OCI-LY7 (cell line): ENCODE measurements at regions of chr6 and their contacts with region 1.

Region 1: DNA sequence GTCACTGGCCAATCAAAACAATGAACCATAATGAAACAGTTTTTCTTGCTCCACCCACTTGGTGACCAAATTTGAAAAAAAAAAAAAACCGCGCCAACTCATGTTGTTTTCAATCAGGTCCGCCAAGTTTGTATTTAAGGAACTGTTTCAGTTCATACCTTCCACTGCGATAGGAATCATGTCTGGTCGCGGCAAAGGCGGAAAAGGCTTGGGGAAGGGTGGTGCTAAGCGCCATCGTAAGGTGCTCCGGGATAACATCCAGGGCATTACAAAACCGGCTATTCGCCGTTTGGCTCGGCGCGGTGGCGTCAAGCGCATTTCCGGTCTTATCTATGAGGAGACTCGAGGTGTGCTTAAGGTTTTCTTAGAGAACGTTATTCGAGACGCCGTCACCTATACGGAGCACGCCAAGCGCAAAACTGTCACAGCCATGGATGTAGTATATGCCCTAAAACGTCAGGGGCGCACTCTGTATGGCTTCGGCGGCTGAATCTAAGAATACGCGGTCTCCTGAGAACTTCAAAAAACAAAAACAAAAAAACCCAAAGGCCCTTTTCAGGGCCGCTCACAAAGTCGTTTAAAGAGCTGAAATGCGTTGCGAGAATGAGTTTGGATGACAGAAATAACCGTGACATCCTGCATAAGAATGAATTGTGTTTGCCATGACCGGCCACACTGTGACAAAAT is 16.7 kb downstream of the HFE start:
- DNase-seq: peak; percentile 94
- H3K4me3 ChIP-seq: peak overlapping the region; percentile 66
- H3K27ac ChIP-seq: peak overlapping the region; percentile 96
- H3K4me1 ChIP-seq: peaks cover 25% of the 10 kb centered on the region
- CTCF ChIP-seq: peak; percentile 65

Region 2: DNA sequence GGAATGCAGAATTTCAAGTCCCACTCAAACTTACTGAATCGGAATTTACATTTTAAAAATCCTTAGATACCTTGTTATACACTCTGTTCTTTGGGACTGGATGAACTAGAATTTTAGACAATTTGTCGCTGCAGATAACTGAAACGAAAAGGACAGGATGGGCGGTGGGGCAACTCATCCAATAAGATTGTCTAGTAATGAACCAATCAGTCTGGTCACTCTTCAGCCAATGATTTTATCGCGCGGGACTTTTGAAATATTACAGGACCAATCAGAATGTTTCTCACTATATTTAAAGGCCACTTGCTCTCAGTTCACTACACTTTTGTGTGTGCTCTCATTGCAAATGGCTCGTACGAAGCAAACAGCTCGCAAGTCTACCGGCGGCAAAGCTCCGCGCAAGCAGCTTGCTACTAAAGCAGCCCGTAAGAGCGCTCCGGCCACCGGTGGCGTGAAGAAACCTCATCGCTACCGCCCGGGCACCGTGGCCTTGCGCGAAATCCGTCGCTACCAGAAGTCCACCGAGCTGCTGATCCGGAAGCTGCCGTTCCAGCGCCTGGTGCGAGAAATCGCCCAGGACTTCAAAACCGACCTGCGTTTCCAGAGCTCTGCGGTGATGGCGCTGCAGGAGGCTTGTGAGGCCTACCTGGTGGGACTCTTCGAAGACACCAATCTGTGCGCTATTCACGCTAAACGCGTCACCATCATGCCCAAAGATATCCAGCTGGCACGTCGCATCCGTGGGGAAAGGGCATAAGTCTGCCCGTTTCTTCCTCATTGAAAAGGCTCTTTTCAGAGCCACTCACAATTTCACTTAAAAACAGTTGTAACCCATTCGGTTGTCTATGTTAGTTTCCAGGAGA is 58.6 kb before region 1 on chr6:
- CTCF ChIA-PET with region 1: no interaction called
- POLR2A ChIA-PET with region 1: interaction called, 15 read pairs
- intact Hi-C with region 1: no loop called
- DNase-seq: peak; percentile 97
- H3K4me3 ChIP-seq: peak overlapping the region; percentile 67
- H3K27ac ChIP-seq: peak overlapping the region; percentile 99
- H3K4me1 ChIP-seq: peaks cover 66% of the 10 kb centered on the region
- CTCF ChIP-seq: peak; percentile 54

Region 3: DNA sequence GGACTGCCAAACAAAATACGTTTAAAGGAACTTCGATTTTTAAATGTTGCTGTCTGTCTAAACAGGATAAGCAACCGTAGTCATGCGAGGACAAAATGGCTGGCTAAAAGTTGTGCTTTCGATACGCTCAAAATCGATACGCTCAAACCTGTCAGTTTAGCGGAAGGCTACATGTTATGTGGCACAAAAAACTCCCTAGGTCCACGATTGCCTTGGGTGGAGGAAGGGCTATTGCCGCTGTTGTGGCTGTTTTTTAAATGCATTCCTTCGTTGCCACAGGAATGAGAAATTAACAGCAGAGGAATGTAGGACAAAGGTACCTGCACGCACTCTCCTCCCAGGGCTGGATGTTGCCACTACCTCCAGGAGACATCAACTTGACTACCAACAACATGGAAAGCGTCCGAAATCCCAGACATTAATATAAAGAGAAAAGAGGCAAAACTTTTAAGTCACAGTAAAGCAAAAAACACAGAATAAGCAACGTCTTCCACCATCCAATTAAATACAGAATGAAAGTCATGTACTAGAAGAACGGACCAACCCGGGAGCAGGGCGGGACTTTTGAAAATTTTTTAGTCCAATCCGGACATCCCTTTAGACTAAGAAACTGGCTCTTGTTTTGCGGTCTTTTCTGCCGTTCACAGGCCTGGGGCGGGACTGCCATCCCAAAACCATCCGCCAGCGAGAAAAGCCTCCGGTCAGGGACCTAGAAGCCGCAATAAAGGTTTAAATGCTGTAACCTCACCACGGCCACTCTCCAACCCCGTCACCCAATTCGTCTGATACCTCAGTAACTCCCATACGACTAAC is 48.9 kb before region 1 on chr6:
- CTCF ChIA-PET with region 1: interaction called, 3 read pairs
- POLR2A ChIA-PET with region 1: interaction called, 77 read pairs
- intact Hi-C with region 1: loop called (anchors 1 kb)
- DNase-seq: peak; percentile 93
- H3K4me3 ChIP-seq: peak overlapping the region; percentile 70
- H3K27ac ChIP-seq: peak overlapping the region; percentile 93
- H3K4me1 ChIP-seq: peaks cover 41% of the 10 kb centered on the region
- CTCF ChIP-seq: no peak

Region 4: GRCh38 chr6:26065952-26066380 is 37.9 kb before region 1 on chr6:
- CTCF ChIA-PET with region 1: interaction called, 10 read pairs
- POLR2A ChIA-PET with region 1: interaction called, 38 read pairs
- intact Hi-C with region 1: no loop called
- DNase-seq: peak; percentile 79
- H3K4me3 ChIP-seq: no peak overlapping the region
- H3K27ac ChIP-seq: no peak overlapping the region
- H3K4me1 ChIP-seq: peaks cover 8% of the 10 kb centered on the region
- CTCF ChIP-seq: peak; percentile 98

Region 5: DNA sequence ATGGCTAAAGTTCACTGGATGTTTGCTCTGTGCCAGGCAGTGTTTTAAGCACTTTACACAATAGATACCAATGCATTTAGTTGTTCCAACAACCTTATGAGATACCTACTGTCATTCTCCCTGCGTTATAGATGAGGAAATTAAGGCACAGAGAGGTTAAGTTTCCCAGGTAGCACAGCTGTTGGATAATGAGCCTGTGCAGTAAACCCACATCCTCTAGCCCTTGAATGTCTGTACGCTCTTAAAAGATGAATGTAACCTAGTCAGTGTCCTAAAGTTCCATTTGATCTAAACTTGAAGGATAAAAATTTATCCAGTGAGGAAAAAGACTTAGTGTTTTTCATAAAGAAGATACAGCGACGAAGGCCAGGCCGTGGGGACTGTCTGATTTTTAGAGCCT is 11.3 kb after region 1 on chr6:
- CTCF ChIA-PET with region 1: no interaction called
- POLR2A ChIA-PET with region 1: interaction called, 23 read pairs
- intact Hi-C with region 1: no loop called
- DNase-seq: no peak
- H3K4me3 ChIP-seq: no peak overlapping the region
- H3K27ac ChIP-seq: peak overlapping the region; percentile 10
- H3K4me1 ChIP-seq: peaks cover 23% of the 10 kb centered on the region
- CTCF ChIP-seq: no peak